HepG2 (cell line): ENCODE measurements at regions of chr7 and their contacts with region 1.

Region 1: DNA sequence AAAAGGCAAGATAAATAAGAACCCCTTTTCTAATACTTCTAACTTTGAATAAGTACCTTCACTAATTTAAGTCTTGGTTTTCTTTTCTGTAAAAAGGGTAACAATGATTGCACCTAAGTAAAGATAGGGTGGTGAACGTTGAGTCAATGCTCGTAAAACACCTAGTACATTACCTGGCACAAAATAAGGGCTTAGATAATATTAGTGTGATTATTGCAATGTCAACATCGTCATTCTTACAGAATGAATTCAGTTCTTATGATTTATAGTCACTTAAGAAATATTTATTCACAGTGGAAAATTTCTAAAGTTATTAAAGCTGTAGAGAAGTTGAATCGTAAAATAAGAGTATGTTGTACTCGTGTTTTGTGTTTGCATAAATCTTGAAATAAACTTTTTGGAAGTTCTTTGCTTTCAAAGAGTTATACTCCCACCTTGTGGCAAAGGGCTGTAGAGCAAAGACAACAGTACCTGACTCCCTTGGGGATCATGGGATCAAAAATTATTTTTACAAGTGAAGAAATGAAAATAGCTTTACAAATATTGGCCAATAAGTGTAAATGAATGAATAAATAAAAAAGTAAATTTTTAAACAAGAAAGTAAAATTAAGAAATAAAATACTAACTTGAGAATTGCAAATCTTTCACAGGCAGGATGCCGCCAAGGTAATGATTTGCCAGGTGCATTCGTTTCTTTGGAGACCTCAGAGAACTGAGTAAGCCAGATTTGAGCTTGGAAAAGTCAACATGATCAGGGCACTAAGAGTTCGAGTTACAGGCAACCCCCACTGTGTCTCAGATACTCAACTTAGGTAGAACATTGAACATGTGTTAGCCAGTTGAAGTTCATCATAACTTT is 285.8 kb upstream of the CACNA2D1 start:
- DNase-seq: peak; percentile 12
- ATAC-seq: peak; percentile 56; the same call in 2 of the 3 replicates
- H3K4me3 ChIP-seq: no peak overlapping the region
- H3K27ac ChIP-seq: no peak overlapping the region
- H3K4me1 ChIP-seq: no peaks in the 10 kb centered on the region
- H3K27me3 ChIP-seq: no peaks in the 10 kb centered on the region
- CTCF ChIP-seq: peak; percentile 54
- EP300 ChIP-seq: no peak
- POLR2A ChIP-seq: no peak
- RAD21 ChIP-seq: no peak

Region 2: GRCh38 chr7:82044497-82045080 is 684.8 kb before region 1 on chr7:
- CTCF ChIA-PET with region 1: no interaction called
- POLR2A ChIA-PET with region 1: no interaction called
- in situ Hi-C with region 1: loop called (anchors 10 kb)
- intact Hi-C with region 1: loop called (anchors 1 kb)
- DNase-seq: peak; percentile 21
- ATAC-seq: no peak
- H3K4me3 ChIP-seq: no peak overlapping the region
- H3K27ac ChIP-seq: no peak overlapping the region
- H3K4me1 ChIP-seq: no peaks in the 10 kb centered on the region
- H3K27me3 ChIP-seq: no peaks in the 10 kb centered on the region
- CTCF ChIP-seq: peak; percentile 56
- EP300 ChIP-seq: no peak
- POLR2A ChIP-seq: no peak
- RAD21 ChIP-seq: 0 out of 2 replicates have a peak, but pooled peaks have one; percentile 28

Region 3: DNA sequence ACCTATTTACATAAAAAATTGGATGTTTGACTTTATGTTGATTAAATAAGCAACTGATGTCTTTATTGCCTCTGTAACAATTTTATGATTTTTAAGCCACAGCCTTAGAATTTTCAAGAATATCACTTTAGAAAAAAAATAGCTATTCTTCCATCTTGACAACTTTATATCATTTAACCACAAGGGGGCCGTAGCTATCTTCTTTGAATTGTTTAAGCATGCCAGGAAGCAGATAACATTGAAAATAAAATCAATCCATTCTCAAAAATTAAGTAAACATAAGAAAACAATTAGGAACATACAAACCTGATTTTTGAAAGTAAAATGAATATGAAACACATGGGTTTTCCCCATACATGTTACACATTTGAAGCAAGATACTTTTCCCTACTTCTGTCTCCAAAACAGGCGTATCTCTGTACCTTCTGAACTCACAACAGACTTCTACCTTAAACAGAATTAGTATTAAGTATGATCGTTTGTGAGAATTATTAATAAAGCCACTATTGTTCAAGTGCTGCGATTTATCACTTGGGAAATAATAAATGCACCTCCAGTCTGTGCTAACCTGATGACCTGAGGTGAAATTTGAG is 494.8 kb before region 1 on chr7:
- CTCF ChIA-PET with region 1: interaction called, 4 read pairs
- POLR2A ChIA-PET with region 1: no interaction called
- in situ Hi-C with region 1: loop called (anchors 10 kb)
- intact Hi-C with region 1: loop called (anchors 1 kb)
- DNase-seq: peak; percentile 16
- ATAC-seq: no peak
- H3K4me3 ChIP-seq: no peak overlapping the region
- H3K27ac ChIP-seq: no peak overlapping the region
- H3K4me1 ChIP-seq: no peaks in the 10 kb centered on the region
- H3K27me3 ChIP-seq: no peaks in the 10 kb centered on the region
- CTCF ChIP-seq: peak; percentile 39
- EP300 ChIP-seq: no peak
- POLR2A ChIP-seq: no peak
- RAD21 ChIP-seq: no peak

Region 4: GRCh38 chr7:82816272-82816671 is 86.9 kb after region 1 on chr7:
- CTCF ChIA-PET with region 1: no interaction called
- POLR2A ChIA-PET with region 1: no interaction called
- in situ Hi-C with region 1: no loop called
- intact Hi-C with region 1: no loop called
- DNase-seq: no peak
- ATAC-seq: no peak
- H3K4me3 ChIP-seq: no peak overlapping the region
- H3K27ac ChIP-seq: no peak overlapping the region
- H3K4me1 ChIP-seq: no peaks in the 10 kb centered on the region
- H3K27me3 ChIP-seq: no peaks in the 10 kb centered on the region
- CTCF ChIP-seq: no peak
- EP300 ChIP-seq: no peak
- POLR2A ChIP-seq: no peak
- RAD21 ChIP-seq: no peak